HepG2 (cell line): ENCODE measurements at regions of chr1 and their contacts with region 1.

Region 1: GRCh38 chr1:56911098-56911938 is 54.5 kb downstream of the C8B start:
- DNase-seq: peak; percentile 77
- ATAC-seq: peak; percentile 50
- H3K4me3 ChIP-seq: peak overlapping the region in 1 of 3 experiments; percentile 11; a peak in 1 of 6 replicates
- H3K27ac ChIP-seq: peak overlapping the region; percentile 92
- H3K4me1 ChIP-seq: peaks cover 77% of the 10 kb centered on the region
- H3K27me3 ChIP-seq: no peaks in the 10 kb centered on the region
- CTCF ChIP-seq: no peak
- EP300 ChIP-seq: peak in 1 of 2 experiments; percentile 81; a peak in 2 of 4 replicates
- POLR2A ChIP-seq: no peak
- RAD21 ChIP-seq: no peak

Region 2: DNA sequence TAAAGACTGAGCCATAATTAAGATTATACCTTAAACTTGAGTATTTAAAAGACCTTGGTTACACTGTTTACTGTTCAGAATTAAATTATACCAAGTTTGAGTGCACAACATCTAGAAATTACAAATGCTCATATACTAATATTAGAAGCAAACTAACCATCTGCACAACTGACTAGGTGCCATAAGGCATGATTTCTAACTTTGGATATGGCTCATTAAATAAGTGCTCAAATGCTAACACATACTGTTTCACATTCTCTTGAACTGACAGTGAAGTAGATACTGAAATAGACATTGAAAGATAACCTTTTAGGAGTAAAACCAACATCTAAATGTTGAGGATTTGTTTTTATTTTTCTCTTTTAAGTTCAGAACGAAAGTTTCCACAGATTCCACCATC is 192.1 kb before region 1 on chr1:
- CTCF ChIA-PET with region 1: no interaction called
- POLR2A ChIA-PET with region 1: no interaction called
- in situ Hi-C with region 1: no loop called
- intact Hi-C with region 1: no loop called
- DNase-seq: no peak
- ATAC-seq: no peak
- H3K4me3 ChIP-seq: no peak overlapping the region
- H3K27ac ChIP-seq: no peak overlapping the region
- H3K4me1 ChIP-seq: no peaks in the 10 kb centered on the region
- H3K27me3 ChIP-seq: no peaks in the 10 kb centered on the region
- CTCF ChIP-seq: no peak
- EP300 ChIP-seq: no peak
- POLR2A ChIP-seq: no peak
- RAD21 ChIP-seq: no peak

Region 3: DNA sequence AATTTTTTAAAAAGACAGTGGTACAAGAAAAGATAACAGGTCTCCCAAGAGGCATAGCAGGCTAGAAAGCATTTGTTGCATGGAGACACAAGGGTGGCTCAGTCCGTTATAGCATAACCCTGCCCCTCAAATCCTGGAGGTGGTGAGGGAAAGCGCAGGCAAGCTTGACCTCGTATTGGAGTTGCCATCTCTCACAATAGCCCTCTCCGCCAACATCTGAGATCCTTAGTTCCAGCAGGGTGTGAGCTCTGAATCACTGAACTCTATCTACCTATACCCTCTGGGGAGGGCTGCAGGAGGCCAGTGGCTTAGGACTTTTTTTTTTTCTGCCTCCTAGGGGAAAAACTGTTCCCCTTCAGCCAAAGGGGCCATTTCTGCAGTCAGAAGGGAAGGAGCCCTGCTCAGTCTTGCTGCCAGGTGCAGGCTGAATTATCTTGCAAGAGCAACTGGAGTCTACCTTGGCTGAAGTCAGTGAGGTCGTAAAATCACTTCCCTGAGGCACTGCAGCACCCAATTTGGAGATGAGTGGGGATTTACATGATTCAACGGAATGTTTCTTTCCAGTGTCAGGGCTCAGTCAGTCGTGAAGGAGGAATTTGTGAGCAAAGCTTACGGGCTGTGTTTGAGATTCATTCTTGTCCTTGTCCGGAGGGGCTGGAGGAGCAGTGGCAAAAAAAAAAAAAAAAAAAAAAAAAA is 73.9 kb before region 1 on chr1:
- CTCF ChIA-PET with region 1: no interaction called
- POLR2A ChIA-PET with region 1: interaction called, 12 read pairs
- in situ Hi-C with region 1: no loop called
- intact Hi-C with region 1: loop called (anchors 2 kb)
- DNase-seq: no peak
- ATAC-seq: no peak
- H3K4me3 ChIP-seq: no peak overlapping the region
- H3K27ac ChIP-seq: no peak overlapping the region
- H3K4me1 ChIP-seq: peaks cover 48% of the 10 kb centered on the region
- H3K27me3 ChIP-seq: no peaks in the 10 kb centered on the region
- CTCF ChIP-seq: no peak
- EP300 ChIP-seq: no peak
- POLR2A ChIP-seq: no peak
- RAD21 ChIP-seq: no peak

Region 4: DNA sequence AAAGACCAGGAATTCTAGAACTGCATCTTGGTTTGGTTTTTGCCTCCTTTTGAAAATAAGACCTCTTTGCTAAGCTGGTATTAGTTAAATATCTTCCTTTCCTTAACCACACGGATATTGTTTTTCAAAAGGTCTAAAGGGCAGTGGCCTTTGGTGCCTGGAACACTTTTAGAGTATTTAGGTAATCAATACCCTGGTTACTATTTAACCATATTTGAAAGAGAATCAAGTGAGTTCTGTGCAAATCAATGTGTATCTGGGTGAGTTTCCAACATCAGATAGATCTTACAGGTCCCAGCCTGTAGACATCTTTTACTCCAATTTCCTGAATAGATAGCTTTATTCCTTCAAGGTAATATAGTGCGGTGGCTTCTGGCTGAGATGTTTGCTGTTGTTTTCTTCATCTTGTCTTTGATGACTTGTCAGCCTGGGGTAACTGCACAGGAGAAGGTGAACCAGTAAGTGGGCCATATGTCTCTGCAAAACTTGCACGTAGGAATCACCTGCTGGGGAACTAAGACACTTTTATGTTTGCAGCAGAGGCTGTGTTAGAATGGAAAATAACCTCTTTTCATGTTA is 56.7 kb before region 1 on chr1 and contains the start of gene C8A:
- CTCF ChIA-PET with region 1: no interaction called
- POLR2A ChIA-PET with region 1: interaction called, 63 read pairs
- in situ Hi-C with region 1: loop called (anchors 5 kb)
- intact Hi-C with region 1: loop called (anchors 1 kb)
- DNase-seq: peak; percentile 87
- ATAC-seq: peak; percentile 96
- H3K4me3 ChIP-seq: peak within 1 kb of the TSS; percentile 46 to 62 (median 49); a peak in 5 of 6 replicates
- H3K27ac ChIP-seq: peak within 1 kb of the TSS; percentile 89
- H3K4me1 ChIP-seq: peaks cover 79% of the 10 kb centered on the region
- H3K27me3 ChIP-seq: no peaks in the 10 kb centered on the region
- CTCF ChIP-seq: no peak
- EP300 ChIP-seq: peak in 1 of 2 experiments; percentile 97; a peak in 2 of 4 replicates
- POLR2A ChIP-seq: peak in 1 of 2 experiments; percentile 39; a peak in 3 of 4 replicates
- RAD21 ChIP-seq: no peak
- total RNA-seq, gene C8A: 8.6 and 15.0 TPM in 2 replicates

Region 5: DNA sequence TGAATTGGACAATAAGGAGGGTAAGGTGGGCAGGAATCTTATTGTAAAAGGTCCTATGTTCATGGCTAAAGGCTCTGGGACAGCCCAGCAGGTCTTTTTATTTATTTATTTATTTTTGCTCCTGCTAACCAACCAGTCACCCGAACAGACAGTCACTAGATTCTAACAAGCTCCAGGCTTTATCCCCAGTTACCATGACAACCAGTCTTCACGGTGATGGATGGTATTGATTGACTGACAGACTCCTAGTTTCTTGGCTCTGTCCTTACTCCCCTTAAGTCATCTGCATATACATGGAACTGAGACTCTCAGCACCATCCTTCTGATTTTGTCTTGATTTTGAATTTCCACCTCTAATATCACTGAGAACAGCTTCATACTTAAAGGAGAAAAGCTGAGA is 12.4 kb before region 1 on chr1:
- CTCF ChIA-PET with region 1: no interaction called
- POLR2A ChIA-PET with region 1: interaction called, 11 read pairs
- in situ Hi-C with region 1: no loop called
- intact Hi-C with region 1: no loop called
- DNase-seq: no peak
- ATAC-seq: no peak
- H3K4me3 ChIP-seq: no peak overlapping the region
- H3K27ac ChIP-seq: no peak overlapping the region
- H3K4me1 ChIP-seq: peaks cover 60% of the 10 kb centered on the region
- H3K27me3 ChIP-seq: no peaks in the 10 kb centered on the region
- CTCF ChIP-seq: no peak
- EP300 ChIP-seq: no peak
- POLR2A ChIP-seq: no peak
- RAD21 ChIP-seq: no peak

Region 6: GRCh38 chr1:56967900-56968832 is 56.8 kb after region 1 on chr1:
- CTCF ChIA-PET with region 1: no interaction called
- POLR2A ChIA-PET with region 1: interaction called, 50 read pairs
- in situ Hi-C with region 1: no loop called
- intact Hi-C with region 1: loop called (anchors 1 kb)
- DNase-seq: peak; percentile 58
- ATAC-seq: peak; percentile 56
- H3K4me3 ChIP-seq: no peak overlapping the region; a peak in 1 of 6 replicates
- H3K27ac ChIP-seq: peak overlapping the region; percentile 65
- H3K4me1 ChIP-seq: peaks cover 73% of the 10 kb centered on the region
- H3K27me3 ChIP-seq: no peaks in the 10 kb centered on the region
- CTCF ChIP-seq: peak; percentile 81
- EP300 ChIP-seq: peak in 1 of 2 experiments; percentile 72; a peak in 1 of 4 replicates
- POLR2A ChIP-seq: no peak
- RAD21 ChIP-seq: peak; percentile 89